ENCODE measurements at regions of chr14 and their contacts with region 1.

Region 1: DNA sequence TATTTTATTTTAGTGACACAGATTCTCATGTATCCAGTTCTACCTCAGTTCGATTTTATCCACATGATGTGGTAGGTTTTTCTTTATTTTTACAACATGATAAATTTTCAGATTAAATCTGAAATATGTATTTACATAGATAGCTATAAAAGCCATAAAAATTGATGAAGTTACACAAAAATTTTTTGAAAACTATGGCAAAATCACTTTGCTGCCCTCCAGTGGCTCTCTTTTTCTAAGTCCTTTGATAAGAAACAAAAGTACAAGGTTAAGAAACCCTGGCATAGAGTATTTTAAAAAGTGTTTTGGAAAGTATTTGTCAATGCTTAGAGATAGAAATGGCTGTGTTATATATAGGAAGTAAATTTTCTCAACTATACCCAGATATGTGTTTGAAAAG is 104.2 kb downstream of the PCNX1 start:
- DNase-seq: peak in 2 of 3 donors; percentile 19 to 30
- H3K4me3 ChIP-seq: no peak overlapping the region
- H3K27ac ChIP-seq: no peak overlapping the region
- H3K4me1 ChIP-seq: peaks cover 0 to 11% (median 3%) of the 10 kb centered on the region in 4 experiments
- H3K27me3 ChIP-seq: no peaks in the 10 kb centered on the region

Region 2: DNA sequence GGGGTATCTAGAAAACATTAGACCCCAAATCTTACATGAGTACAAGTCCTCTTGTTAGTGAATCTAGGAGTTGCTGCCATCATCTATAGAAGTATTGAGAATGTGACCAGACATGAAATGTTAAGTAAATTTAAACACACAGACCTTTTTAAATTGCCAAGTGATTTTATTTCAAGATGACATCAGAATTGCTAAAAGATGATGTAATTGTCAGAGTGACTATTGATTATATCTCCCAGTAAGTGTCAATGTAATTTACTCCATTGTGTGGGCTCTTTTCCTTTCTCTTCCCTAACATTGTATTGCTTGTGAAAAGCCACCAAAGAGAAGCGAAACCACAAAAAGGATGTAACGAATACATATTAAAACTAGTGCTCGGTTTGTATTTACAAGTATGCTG is 542.7 kb before region 1 on chr14:
- CTCF ChIA-PET with region 1: no interaction called
- POLR2A ChIA-PET with region 1: no interaction called
- DNase-seq: no peak
- H3K4me3 ChIP-seq: no peak overlapping the region
- H3K27ac ChIP-seq: no peak overlapping the region
- H3K4me1 ChIP-seq: no peaks in the 10 kb centered on the region
- H3K27me3 ChIP-seq: no peaks in the 10 kb centered on the region

Region 3: DNA sequence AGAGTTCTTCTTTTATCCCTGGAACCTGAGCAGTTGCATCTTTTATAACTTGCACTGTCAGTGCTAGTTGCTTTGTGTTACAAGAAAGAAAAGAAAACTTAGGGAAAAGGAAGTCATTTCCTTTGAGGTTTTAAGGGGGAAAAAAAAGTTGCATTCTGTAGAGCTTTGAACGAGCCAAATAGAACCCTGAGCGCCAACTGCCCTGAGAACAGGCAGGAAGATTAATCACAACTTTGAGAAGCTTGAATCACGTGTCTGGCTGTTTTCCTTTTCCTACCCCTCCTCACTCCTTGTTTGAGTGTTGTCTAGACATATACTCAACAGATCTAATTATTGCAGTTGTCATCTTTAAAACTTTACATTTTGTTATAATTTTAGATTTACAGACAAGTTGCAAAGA is 91.7 kb before region 1 on chr14:
- CTCF ChIA-PET with region 1: no interaction called
- POLR2A ChIA-PET with region 1: no interaction called
- DNase-seq: peak; percentile 24 to 55 (median 44)
- H3K4me3 ChIP-seq: peak overlapping the region in 3 of 7 experiments; percentile 1 to 43 (median 33)
- H3K27ac ChIP-seq: no peak overlapping the region
- H3K4me1 ChIP-seq: peaks cover 7 to 32% (median 23%) of the 10 kb centered on the region in 4 experiments
- H3K27me3 ChIP-seq: no peaks in the 10 kb centered on the region

Region 4: DNA sequence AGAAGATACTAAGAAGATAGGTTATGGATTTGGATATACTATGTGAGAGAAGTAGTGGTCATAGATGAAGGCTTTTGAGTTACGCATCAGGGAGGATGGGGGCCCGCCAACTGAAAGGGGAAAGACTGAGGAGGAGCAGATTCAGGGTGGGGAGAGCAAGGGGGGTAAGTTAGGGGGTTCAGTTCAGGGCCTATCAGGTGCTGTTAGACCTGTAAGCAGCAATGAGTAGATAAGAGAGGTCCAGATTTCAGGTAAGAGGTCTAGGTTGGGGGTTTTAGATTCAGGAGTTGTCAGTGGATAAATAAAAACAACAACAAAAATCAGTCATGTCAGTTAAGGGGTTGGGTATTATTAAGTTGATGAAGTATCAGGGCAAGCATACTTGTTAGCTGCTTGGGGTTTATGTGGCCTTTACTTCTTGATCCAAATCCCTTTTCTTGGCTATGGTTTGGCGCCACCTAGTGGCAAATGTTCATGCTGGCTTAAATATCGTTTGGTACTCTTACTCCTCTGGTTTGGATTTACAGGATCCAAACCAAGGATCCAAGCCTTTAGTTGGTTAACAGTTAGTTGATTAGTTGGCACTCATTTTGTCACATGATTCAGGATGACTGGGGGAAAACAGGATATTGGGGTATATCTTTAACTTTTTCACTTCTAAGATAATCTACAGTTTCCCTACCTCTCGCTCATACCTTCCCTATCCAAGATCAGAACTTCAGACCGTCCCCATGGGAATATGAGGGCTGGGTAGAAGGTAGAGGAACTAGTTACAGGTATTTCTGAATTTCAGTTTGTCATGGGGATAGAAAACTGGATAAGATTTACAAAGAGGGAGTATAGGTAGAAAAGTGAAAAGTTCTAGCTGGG is 39.1 kb before region 1 on chr14:
- CTCF ChIA-PET with region 1: interaction called, 15 read pairs
- POLR2A ChIA-PET with region 1: no interaction called
- DNase-seq: peak; percentile 88 to 94 (median 89)
- H3K4me3 ChIP-seq: no peak overlapping the region
- H3K27ac ChIP-seq: no peak overlapping the region
- H3K4me1 ChIP-seq: peaks cover 0 to 9% (median 2%) of the 10 kb centered on the region in 4 experiments
- H3K27me3 ChIP-seq: no peaks in the 10 kb centered on the region

Region 5: GRCh38 chr14:70981000-70981952 is 30.2 kb before region 1 on chr14:
- CTCF ChIA-PET with region 1: interaction called, 27 read pairs
- POLR2A ChIA-PET with region 1: no interaction called
- DNase-seq: peak in 2 of 3 donors; percentile 69 to 81
- H3K4me3 ChIP-seq: peak overlapping the region in 5 of 7 experiments; percentile 28 to 72 (median 57)
- H3K27ac ChIP-seq: peak overlapping the region; percentile 92 to 95
- H3K4me1 ChIP-seq: peaks cover 18 to 41% (median 25%) of the 10 kb centered on the region in 4 experiments
- H3K27me3 ChIP-seq: no peaks in the 10 kb centered on the region

Measured in common myeloid progenitor, CD34-positive (primary cell).